PC-9 (cell line): ENCODE measurements at regions of chr7 and their contacts with region 1.

Region 1: DNA sequence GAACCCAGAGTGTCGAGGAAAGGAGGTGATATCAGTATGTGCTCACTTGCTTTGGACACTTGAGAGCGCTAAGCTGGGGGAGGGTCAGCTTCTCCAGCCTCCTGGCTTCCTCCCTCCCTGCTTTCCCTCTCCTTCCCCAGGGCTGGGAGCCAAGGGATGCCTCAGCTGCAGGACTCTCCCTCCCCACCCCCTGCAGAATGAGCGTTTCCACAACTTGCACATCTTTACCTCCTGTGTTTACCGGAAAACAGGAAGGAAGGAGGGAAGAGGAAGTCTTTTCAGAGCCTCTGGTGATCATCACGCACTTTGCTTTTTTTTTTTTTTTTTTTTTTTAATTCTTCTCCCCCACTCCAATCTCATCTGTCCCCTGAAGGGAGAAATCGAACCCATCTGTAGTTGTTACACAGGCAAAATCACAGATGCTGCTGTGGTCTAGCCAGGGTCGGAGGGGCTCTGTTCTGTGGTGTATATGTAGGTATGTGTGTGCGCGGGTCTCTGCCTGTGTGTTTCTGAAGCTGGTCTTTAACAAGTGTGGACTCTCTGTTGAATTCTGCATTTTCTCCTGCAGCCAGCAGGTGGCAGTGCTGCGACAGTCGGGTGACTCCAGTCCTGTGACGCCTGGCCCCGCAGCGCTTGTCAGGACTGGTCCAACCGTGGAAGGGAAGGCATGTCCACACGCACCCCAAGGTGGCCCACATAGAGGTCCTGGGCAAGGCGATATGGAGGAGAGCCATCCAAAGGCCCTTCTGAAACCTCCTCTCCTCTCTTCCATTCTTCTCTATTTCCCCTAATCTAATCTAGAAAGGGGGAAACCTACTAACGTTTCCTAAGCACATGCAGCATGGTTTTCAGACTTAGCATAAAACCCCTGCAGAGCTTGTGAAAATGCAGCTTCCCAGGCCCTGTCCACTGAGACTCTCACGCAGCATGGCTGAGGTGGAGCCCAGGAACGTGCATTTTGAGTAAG is 257.6 kb downstream of the PLXNA4 start:
- DNase-seq: peak; percentile 61 to 72
- H3K4me3 ChIP-seq: no peak overlapping the region
- H3K27ac ChIP-seq: no peak overlapping the region
- H3K4me1 ChIP-seq: no peaks in the 10 kb centered on the region
- H3K27me3 ChIP-seq: peaks cover 67% of the 10 kb centered on the region
- CTCF ChIP-seq: peak; percentile 92

Region 2: GRCh38 chr7:133434055-133434865 is 1115.6 kb after region 1 on chr7:
- CTCF ChIA-PET with region 1: interaction called, 4 read pairs
- POLR2A ChIA-PET with region 1: no interaction called
- intact Hi-C with region 1: loop called (anchors 5 kb)
- DNase-seq: no peak
- H3K4me3 ChIP-seq: no peak overlapping the region
- H3K27ac ChIP-seq: no peak overlapping the region
- H3K4me1 ChIP-seq: no peaks in the 10 kb centered on the region
- H3K27me3 ChIP-seq: no peaks in the 10 kb centered on the region
- CTCF ChIP-seq: peak; percentile 46

Region 3: GRCh38 chr7:134016223-134016941 is 1697.7 kb after region 1 on chr7:
- CTCF ChIA-PET with region 1: no interaction called
- POLR2A ChIA-PET with region 1: no interaction called
- intact Hi-C with region 1: loop called (anchors 1 kb)
- DNase-seq: peak in 1 of 2 experiments; percentile 16
- H3K4me3 ChIP-seq: no peak overlapping the region
- H3K27ac ChIP-seq: no peak overlapping the region
- H3K4me1 ChIP-seq: no peaks in the 10 kb centered on the region
- H3K27me3 ChIP-seq: no peaks in the 10 kb centered on the region
- CTCF ChIP-seq: peak; percentile 76

Region 4: DNA sequence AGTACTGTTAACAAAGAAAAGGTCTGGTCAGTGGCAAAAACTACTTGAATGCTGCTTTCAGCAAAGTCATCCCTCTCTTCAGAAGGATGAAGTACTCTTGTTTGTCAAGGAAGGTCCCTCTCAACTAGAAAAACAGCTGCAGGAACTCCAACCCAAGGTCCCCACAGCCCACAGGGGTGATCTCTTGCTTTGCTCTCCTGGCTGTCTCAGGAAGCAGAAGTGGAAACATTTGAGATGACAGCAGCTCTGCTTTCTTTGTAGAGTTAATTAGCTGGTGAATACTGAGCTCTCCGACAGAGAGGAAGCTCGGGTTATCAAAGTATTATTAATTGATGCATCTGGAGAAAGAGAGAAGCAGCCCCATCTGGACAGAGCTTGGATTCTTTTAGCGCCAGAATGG is 1783.1 kb after region 1 on chr7:
- CTCF ChIA-PET with region 1: no interaction called
- POLR2A ChIA-PET with region 1: no interaction called
- intact Hi-C with region 1: no loop called
- DNase-seq: no peak
- H3K4me3 ChIP-seq: no peak overlapping the region
- H3K27ac ChIP-seq: no peak overlapping the region
- H3K4me1 ChIP-seq: no peaks in the 10 kb centered on the region
- H3K27me3 ChIP-seq: no peaks in the 10 kb centered on the region
- CTCF ChIP-seq: no peak

Region 5: GRCh38 chr7:134140889-134141867 is 1822.5 kb after region 1 on chr7:
- CTCF ChIA-PET with region 1: no interaction called
- POLR2A ChIA-PET with region 1: no interaction called
- intact Hi-C with region 1: loop called (anchors 5 kb)
- DNase-seq: peak; percentile 45 to 63
- H3K4me3 ChIP-seq: no peak overlapping the region
- H3K27ac ChIP-seq: no peak overlapping the region
- H3K4me1 ChIP-seq: no peaks in the 10 kb centered on the region
- H3K27me3 ChIP-seq: no peaks in the 10 kb centered on the region
- CTCF ChIP-seq: peak; percentile 94